Mucosa of descending colon (tissue), 3 donors: ENCODE measurements at regions of chr10 and their contacts with region 1.

Region 1: GRCh38 chr10:69639291-69640195 is 9.5 kb downstream of the FAM241B start:
- DNase-seq: peak in 2 of 3 donors; percentile 59 to 82
- ATAC-seq: peak; percentile 61
- H3K4me3 ChIP-seq: no peak overlapping the region
- H3K4me1 ChIP-seq: no peaks in the 10 kb centered on the region
- CTCF ChIP-seq: peak; percentile 75

Region 2: DNA sequence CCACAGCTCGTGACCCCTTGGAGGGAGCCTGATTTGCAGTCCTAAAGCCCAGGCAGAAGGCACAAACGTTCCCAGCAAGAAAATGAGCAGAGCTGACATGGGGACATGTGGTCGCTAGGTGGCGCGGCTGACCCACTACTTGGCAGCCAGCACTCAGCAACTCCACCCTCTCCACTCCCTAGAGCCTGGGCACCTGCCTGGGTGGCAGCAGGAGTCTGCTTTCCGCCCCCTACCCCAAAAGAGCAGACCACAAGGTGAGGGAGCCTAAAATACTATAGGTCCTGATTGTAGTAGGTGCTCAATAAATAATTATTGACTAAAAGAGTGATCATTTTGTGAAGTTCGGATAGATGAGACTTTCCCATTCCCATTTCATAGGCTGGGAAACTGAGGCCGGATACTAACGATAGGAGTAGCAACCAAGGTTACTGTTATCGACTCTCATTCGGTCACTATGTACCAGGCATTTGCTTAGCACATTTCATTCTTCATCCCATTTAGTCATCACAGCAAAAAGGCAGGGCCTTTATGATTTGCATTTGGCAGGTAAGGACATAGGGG is 123.8 kb before region 1 on chr10:
- intact Hi-C with region 1: loop called (anchors 2 to 5 kb)
- DNase-seq: peak; percentile 73 to 89 (median 85)
- ATAC-seq: peak; percentile 97
- H3K4me3 ChIP-seq: no peak overlapping the region
- H3K4me1 ChIP-seq: no peaks in the 10 kb centered on the region
- CTCF ChIP-seq: peak; percentile 74